ENCODE measurements at regions of chr13 and their contacts with region 1.

Region 1: DNA sequence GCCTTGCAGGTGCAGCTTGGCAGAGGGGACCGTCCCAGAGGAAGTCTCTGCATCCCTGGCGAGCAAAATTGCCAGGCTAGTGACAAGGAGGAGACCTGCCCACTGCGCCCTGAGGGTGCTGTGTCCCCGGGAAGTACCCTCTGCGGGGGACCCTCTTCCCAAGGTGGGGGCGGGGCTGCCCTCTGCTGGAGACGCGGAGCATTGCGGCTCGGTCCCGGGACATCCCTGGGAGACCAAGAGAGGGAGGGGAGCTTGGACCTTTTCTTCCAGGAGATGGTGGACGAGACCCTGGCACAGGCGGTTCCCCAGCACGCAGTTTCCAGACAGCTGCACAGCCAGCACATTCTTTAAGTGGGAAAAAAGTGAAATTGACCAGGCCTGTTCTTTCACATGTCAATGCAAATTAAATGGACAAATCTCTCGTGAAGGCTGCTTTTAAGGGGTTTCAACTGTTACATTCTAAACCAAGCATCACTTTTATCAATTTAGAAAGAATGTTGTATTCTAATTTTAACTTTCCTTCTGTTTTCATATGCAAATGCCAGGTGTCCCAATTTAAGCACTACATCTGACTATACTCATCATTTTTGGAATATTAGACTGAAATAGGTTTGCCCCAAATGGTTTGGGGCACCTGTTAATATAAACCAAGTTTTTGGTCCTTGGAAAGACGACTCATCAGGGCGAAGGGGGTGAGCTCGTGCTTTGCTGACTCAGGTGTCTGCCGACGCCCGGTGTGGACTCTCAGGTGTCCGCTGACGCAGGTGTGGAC is 60.7 kb downstream of the MCF2L start:
- DNase-seq: peak; percentile 46
- ATAC-seq: no peak
- H3K4me3 ChIP-seq: no peak overlapping the region
- H3K27ac ChIP-seq: no peak overlapping the region
- H3K4me1 ChIP-seq: no peaks in the 10 kb centered on the region
- H3K27me3 ChIP-seq: no peaks in the 10 kb centered on the region
- CTCF ChIP-seq: peak; percentile 86

Region 2: GRCh38 chr13:112942689-112943308 is 86.9 kb before region 1 on chr13:
- CTCF ChIA-PET with region 1: interaction called, 4 read pairs
- POLR2A ChIA-PET with region 1: no interaction called
- intact Hi-C with region 1: loop called (anchors 1 kb)
- DNase-seq: peak; percentile 96
- ATAC-seq: peak; percentile 97
- H3K4me3 ChIP-seq: peak overlapping the region; percentile 70
- H3K27ac ChIP-seq: no peak overlapping the region
- H3K4me1 ChIP-seq: no peaks in the 10 kb centered on the region
- H3K27me3 ChIP-seq: no peaks in the 10 kb centered on the region
- CTCF ChIP-seq: peak; percentile 87

Region 3: DNA sequence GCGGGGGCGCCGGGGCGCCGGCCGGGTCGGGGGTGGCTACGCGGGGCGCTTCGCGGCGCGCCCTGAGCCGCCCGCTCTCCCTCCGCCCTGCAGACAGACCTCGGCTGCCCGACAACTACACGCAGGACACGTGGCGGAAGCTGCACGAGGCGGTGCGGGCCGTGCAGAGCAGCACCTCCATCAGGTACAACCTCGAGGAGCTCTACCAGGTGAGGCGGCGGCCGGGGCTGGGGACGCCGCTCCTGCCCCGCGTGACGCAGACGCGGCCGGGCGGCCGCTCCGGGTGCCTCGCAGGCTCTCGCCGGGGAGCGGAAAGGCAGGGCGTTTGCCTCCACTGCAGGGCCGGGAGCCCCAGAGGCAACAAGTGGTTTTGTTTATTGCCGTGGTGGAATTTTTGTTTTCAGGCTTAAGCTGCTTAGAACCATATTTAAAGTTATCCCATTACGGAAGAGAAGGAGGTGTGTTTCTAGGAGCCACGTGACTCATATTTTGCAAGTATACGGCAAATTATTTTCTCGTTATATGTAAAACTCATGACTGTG is 180.3 kb after region 1 on chr13:
- CTCF ChIA-PET with region 1: no interaction called
- POLR2A ChIA-PET with region 1: no interaction called
- intact Hi-C with region 1: loop called (anchors 10 kb)
- DNase-seq: peak; percentile 49
- ATAC-seq: peak; percentile 44
- H3K4me3 ChIP-seq: peak overlapping the region; percentile 90
- H3K27ac ChIP-seq: peak overlapping the region; percentile 49
- H3K4me1 ChIP-seq: peaks cover 36% of the 10 kb centered on the region
- H3K27me3 ChIP-seq: no peaks in the 10 kb centered on the region
- CTCF ChIP-seq: no peak

Region 4: DNA sequence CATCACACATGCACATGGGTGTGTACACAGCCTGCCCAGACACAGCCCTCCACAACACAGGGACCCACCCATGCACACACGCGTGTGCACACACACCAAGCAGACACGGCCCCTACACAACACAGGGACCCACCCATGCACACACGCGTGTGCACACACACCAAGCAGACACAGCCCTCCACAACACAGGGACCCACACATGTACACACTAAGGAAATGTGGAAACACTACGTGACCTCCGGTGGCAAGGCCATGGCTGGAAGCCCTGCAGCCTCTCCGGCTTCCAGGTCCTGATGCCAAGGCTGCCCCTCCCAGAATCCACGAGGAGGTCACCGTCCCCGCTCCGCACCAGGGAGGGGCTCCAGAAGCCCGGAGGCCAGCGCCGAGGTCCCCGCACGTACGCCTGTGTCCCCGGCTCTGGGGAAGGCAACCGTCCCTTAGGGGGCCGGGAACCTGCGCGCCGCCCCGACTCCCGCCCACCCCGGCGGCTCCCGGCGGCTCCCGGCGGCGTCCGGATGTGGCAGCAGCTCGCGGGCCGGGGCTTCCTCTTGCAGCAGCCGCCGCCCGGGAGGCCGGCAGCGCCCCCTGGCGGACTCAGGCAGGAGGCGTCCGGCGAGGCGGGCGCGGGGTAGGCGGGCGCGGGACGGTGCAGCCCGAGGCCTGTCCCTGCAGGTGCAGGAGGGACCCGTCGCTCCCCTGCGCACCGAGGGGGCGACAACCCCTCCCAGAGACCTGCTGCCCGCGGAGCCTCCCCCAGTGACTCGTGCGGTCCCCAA is 364.1 kb after region 1 on chr13:
- CTCF ChIA-PET with region 1: no interaction called
- POLR2A ChIA-PET with region 1: no interaction called
- intact Hi-C with region 1: loop called (anchors 2 kb)
- DNase-seq: peak; percentile 77
- ATAC-seq: peak; percentile 98
- H3K4me3 ChIP-seq: peak overlapping the region; percentile 72
- H3K27ac ChIP-seq: no peak overlapping the region
- H3K4me1 ChIP-seq: peaks cover 10% of the 10 kb centered on the region
- H3K27me3 ChIP-seq: no peaks in the 10 kb centered on the region
- CTCF ChIP-seq: peak; percentile 55

Measured in PC-3 (cell line).